Activated CD8-positive, alpha-beta T cell treated with anti-CD3 and anti-CD28 coated beads for 36 hours (primary cell): ENCODE measurements at regions of chr5 and their contacts with region 1.

Region 1: DNA sequence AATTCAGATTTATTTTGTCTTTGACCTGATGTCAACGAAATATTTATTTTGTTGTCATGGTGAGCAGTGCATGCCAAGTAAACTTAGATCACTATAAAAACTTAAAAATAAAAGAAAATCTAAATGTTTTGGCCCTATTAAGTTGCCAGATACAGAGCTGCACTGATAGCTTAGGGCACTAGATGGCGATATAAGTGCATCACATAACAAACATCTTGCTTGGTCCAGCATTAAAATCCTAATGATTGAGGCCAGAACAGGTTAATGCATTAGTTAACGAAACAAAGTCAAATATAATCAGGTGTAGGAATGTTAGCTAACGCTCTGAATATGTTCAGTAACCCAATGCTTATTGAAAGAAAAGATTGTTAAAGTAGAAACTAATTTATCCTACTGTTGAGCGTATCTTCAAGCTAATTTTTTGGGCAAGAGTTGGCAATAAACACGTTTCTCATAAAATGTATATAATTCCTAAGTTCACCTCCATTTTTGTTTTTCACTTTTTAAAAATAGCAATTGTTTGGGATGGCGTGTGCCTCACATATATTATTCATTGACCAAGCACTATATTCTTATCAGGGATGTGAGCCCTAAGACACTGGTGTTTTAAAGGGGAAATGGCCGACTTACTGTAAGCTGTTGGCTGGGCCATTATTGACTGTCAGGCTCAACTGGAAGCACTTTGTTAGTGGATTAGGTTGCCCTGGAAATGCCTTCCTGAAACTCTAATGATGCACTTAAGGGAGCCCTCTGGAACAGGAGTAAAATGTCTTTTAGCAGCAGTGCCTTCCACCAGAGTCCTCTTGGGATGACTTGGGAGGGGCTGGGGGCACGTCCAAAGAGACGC is 33.3 kb downstream of the KCTD16 start:
- DNase-seq: peak; percentile 61
- ATAC-seq: peak; percentile 77
- H3K4me3 Mint-ChIP-seq: no peak overlapping the region
- H3K27ac Mint-ChIP-seq: no peak overlapping the region
- H3K4me1 Mint-ChIP-seq: peaks cover 5% of the 10 kb centered on the region
- H3K27me3 Mint-ChIP-seq: peaks cover 41% of the 10 kb centered on the region
- CTCF ChIP-seq: peak; percentile 89

Region 2: DNA sequence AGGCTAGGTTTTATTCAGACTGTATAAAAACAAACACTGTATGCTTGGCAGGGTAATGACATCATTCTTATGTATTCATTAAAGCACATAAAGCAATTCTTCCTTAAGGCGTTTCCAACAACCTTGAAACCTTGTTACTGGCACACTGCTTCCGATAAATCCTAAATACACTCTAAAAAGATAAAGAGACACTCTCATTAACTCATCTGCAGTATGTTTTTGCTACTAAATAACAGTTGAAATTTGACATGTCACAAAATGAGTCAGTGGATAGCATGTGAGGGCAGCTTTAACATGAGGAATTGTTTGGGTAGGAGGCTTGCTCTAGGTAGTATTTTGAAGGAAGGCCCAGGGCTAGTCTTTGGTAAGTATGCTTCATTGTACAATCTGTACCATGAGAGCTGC is 47.2 kb before region 1 on chr5:
- CTCF ChIA-PET with region 1: no interaction called
- POLR2A ChIA-PET with region 1: no interaction called
- intact Hi-C with region 1: no loop called
- DNase-seq: no peak
- ATAC-seq: no peak
- H3K4me3 Mint-ChIP-seq: no peak overlapping the region
- H3K27ac Mint-ChIP-seq: peak overlapping the region; percentile 5
- H3K4me1 Mint-ChIP-seq: peaks cover 2% of the 10 kb centered on the region
- H3K27me3 Mint-ChIP-seq: no peaks in the 10 kb centered on the region
- CTCF ChIP-seq: no peak

Region 3: DNA sequence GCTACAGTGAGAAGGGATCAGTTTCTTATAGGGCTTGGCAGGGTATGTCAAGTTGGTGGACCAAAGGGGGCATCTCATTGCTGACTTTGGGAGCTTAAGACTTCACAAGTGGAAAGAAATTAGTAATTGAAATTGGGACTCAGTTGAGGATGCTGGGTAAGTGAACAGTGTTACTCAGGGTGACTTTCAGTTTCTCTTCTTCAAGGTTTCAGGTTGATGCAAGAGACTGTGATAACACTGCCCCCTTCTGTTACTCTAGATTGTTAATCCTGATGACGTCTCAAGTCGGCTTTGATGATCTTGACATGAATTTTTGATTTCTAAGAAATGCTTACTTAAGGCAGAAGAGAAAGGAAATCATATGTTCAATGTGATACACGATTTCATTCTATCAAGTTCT is 12.0 kb before region 1 on chr5:
- CTCF ChIA-PET with region 1: interaction called, 54 read pairs
- POLR2A ChIA-PET with region 1: no interaction called
- intact Hi-C with region 1: no loop called
- DNase-seq: peak; percentile 47
- ATAC-seq: peak; percentile 81
- H3K4me3 Mint-ChIP-seq: no peak overlapping the region
- H3K27ac Mint-ChIP-seq: no peak overlapping the region
- H3K4me1 Mint-ChIP-seq: peaks cover 22% of the 10 kb centered on the region
- H3K27me3 Mint-ChIP-seq: no peaks in the 10 kb centered on the region
- CTCF ChIP-seq: peak; percentile 58

Region 4: GRCh38 chr5:145237843-145238242 is 1033.9 kb after region 1 on chr5:
- CTCF ChIA-PET with region 1: no interaction called
- POLR2A ChIA-PET with region 1: no interaction called
- intact Hi-C with region 1: loop called (anchors 10 kb)
- DNase-seq: peak; percentile 8
- ATAC-seq: no peak
- H3K4me3 Mint-ChIP-seq: no peak overlapping the region
- H3K27ac Mint-ChIP-seq: no peak overlapping the region
- H3K4me1 Mint-ChIP-seq: no peaks in the 10 kb centered on the region
- H3K27me3 Mint-ChIP-seq: no peaks in the 10 kb centered on the region
- CTCF ChIP-seq: peak; percentile 34

Region 5: GRCh38 chr5:145825751-145826180 is 1621.8 kb after region 1 on chr5:
- CTCF ChIA-PET with region 1: interaction called, 14 read pairs
- POLR2A ChIA-PET with region 1: no interaction called
- intact Hi-C with region 1: loop called (anchors 10 kb)
- DNase-seq: no peak
- ATAC-seq: no peak
- H3K4me3 Mint-ChIP-seq: no peak overlapping the region
- H3K27ac Mint-ChIP-seq: no peak overlapping the region
- H3K4me1 Mint-ChIP-seq: no peaks in the 10 kb centered on the region
- H3K27me3 Mint-ChIP-seq: peaks cover 1% of the 10 kb centered on the region
- CTCF ChIP-seq: peak; percentile 86